Cardiac septum (tissue), 1 donor: ENCODE measurements at regions of chr19 and their contacts with region 1.

Region 1: DNA sequence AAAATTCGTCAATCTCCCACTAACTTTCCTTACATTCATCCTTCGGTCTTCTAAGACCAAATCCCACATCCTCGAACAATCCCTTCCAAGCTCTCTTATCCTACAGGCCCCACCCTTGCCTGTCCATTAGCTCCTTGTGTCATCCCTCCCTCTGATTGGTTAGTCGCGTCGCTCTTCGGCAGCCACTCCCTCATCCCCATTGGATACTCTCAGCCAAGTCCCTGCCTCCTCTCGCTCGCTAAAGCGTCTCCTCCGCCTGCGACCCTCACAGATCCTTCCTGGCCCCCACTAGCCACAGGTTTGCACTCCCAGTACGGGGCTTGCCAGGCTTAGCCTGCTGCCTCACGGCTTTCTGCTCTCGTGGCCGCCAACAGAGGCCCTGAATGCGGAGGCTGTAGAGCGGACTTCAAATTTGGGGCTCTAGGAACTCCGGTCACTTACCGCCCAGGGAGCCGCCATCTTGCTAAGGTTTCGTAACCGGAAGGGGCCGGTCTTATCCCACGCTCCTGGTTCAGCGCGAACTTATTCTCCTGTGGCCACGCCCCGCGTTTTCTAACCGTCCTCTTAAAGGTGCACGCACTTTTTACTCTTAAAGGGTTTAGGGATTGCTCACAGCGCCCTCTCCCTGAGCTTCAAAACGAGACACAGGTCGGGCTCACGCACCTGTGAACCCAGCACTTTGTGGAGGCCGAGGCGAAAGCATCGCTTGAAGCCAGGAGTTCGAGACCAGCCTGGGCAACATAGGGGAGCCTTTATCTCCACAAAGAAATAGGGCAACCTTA is at the start of gene DMAC2:
- DNase-seq: peak; percentile 99
- total RNA-seq, gene DMAC2: 84.4 TPM

Region 2: DNA sequence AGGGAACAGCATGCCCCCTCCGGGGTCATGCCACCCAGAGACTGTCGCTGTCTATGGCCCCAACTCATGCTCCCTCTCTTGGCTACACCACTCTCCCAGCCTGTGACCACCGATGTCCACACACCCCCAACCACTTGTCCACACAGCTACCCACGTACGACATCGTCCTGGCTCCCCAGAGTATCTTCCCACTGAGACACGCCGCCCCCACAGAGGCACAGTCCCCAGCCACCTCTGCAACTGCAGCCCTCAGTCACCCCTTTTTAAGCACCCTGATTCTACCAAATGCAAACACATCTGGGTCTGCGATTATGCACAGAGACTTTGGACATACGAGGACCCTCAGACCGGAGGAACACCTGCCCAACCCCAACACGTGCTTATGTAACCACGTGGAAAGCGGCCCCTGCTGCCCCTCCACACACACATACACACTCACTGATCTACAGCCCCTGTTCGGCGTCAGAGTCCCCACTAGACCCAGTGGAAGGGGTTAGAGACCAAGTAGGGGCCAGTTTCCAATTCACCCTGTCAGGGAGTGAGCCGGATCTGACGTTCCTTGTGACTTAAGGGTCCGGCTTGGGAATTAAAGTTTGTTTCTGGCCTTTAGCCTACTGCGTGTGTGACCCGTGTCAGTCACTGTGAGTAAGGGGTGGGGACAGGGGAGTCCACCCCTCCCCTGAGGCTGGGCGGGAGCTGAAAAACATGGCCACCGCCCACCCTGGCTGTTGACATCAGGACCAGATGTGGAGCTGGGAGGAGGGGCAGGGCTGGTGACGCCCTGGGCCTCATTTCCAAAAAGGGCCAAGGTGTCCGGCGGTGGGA is 232.5 kb before region 1 on chr19:
- intact Hi-C with region 1: loop called (anchors 5 kb)
- DNase-seq: no peak

Region 3: DNA sequence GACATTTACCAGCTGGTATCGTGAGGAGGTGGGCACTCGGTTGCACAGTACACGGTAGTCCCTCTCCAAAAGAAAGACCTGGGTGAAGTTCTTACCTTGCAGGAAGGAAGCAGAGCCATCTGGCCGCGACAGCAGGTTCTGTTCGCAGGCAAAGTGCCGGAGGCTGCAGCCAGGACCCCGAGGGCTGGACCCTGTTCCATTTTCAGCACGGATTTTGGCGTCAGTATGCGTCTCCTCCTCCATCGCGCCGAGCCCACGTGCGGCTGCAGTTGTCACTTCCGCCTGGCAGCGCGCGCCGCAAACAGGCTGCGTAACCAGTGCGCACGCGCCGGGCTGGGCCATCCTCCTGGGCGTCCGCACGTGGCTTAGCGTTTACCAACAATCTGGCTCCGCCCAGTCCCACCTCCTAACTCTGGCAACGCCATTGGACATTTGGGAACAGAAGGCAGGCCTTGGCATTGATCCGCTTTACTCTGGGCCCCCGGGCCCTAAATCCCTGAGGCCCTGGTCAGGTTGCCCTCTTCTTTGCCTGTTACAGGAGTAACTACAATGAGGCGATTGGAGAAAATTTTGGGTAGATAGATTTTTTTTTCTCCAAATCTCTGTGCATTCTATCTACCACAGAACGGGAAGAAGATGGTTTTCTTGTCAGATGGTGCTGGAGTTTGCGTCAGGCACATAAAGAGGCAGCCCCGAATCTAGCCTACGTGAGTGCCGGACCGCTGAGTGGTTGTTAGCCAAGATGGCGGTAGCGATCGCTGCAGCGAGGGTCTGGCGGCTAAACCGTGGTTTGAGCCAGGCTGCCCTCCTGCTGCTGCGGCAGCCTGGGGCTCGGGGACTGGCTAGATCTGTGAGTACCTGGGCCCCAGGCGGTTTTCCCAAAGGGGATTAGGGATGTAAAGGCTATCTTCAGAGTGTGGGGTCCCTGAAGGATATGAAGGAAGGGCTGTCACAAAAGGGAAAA is 42.3 kb before region 1 on chr19 and contains the starts of genes BCKDHA and EXOSC5:
- intact Hi-C with region 1: loop called (anchors 2 kb)
- DNase-seq: peak; percentile 100
- total RNA-seq, gene BCKDHA: 36.9 TPM
- total RNA-seq, gene EXOSC5: 9.0 TPM

Region 4: DNA sequence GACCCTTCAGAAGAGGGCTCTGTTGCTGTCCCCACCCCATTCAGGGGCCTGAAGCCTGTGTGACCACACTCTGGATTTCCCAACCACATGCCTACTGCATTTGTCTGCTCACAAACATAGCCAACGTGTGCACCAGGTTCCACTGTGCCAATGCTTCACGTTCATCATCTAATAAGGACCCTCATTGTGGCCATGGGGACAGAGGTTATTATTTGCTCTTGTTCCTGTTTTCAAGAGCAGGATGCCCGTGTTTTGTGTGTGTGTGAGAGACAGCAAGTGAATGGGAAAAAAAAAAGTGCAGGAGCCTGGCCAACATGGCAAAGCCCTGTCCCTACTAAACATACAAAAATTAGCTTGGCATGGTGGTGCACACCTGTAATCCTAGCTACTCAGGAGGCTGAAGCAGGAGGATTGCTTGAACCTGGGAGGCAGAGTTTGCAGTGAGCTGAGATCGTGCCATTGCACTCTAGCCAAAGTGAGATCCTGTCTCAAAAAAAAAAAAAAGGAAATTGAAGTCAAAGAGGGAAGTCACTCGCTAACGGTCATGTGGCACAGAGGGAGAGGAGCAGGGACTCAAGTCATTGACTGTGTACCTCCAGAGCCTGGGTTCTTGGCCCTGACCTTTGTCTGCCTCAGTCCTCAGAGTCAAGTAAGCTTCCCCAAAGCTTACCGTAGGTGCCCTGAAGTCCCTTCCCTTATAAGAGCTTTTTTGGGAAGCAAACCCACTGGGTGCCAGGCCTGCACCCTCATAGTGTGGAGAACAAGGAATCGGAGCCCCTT is 19.3 kb before region 1 on chr19:
- intact Hi-C with region 1: no loop called
- DNase-seq: no peak